Panc1 (cell line): ENCODE measurements at regions of chr12 and their contacts with region 1.

Region 1: GRCh38 chr12:116492703-116493324 is 66.4 kb upstream of the MAP1LC3B2 start:
- DNase-seq: peak; percentile 41
- ATAC-seq: peak; percentile 77
- H3K4me3 ChIP-seq: no peak overlapping the region
- H3K27ac ChIP-seq: peak overlapping the region; percentile 68
- H3K4me1 ChIP-seq: peaks cover 8% of the 10 kb centered on the region; the same call in 1 of the 2 replicates
- H3K27me3 ChIP-seq: no peaks in the 10 kb centered on the region
- CTCF ChIP-seq: no peak

Region 2: DNA sequence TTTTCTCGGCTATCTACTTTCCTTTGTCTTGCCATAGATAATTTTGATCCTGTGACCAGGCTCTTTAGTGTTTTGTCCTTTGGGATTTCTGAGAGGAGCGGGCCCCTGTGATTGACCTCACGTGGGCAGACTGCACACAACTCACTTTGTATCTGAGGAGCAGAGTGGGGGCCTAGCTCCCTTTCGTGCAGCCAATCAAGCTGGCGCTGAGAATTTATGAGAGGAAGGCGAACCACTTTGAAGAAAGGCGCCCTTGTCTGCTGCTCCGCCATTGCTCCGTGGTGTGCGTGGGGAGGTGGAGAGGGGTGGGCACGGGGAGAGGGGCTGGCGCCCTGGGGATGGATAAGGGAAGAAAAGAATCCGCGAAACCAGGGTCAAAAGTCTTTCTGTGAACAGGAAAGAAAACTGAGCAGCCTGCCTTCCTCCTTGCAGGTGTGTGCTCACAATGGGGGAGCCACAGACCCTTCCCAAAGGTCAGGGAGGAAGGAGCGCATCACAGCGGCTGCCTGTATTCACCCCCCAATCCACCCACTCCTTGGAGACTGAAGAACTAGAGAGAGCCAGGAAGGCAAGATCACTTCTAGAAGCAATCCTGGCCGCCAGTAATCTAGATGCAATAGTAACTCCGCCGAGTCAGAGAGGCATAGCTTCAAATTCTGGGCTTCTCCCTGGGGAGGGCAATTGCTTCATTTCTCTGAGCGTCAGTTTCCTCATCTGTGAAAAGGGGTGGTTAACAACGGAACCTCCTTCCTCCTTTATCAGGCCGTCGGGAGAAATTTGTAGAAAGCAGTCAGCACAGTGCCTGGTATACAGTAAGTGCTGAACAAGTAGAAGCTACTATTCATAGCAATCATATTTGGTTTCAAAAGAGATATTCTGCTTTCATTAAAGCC is 190.4 kb before region 1 on chr12:
- CTCF ChIA-PET with region 1: no interaction called
- POLR2A ChIA-PET with region 1: interaction called, 11 read pairs
- in situ Hi-C with region 1: no loop called
- intact Hi-C with region 1: no loop called
- DNase-seq: no peak
- ATAC-seq: no peak
- H3K4me3 ChIP-seq: no peak overlapping the region
- H3K27ac ChIP-seq: peak overlapping the region; percentile 31; the same call in 1 of the 2 replicates
- H3K4me1 ChIP-seq: peaks cover 9% of the 10 kb centered on the region; the same call in 1 of the 2 replicates
- H3K27me3 ChIP-seq: no peaks in the 10 kb centered on the region
- CTCF ChIP-seq: no peak